Activated CD8-positive, alpha-beta T cell treated with anti-CD3 and anti-CD28 coated beads, Interleukin-2, amount 10 ng/mL, durations not matched to agents 7 days and 5 days (primary cell): ENCODE measurements at regions of chr12 and their contacts with region 1.

Region 1: GRCh38 chr12:67148265-67148664 is 120.9 kb upstream of the CAND1 start:
- DNase-seq: no peak
- ATAC-seq: no peak
- H3K4me3 Mint-ChIP-seq: no peak overlapping the region
- H3K27ac Mint-ChIP-seq: no peak overlapping the region
- H3K4me1 Mint-ChIP-seq: peaks cover 15% of the 10 kb centered on the region
- H3K27me3 Mint-ChIP-seq: peaks cover 2% of the 10 kb centered on the region

Region 2: DNA sequence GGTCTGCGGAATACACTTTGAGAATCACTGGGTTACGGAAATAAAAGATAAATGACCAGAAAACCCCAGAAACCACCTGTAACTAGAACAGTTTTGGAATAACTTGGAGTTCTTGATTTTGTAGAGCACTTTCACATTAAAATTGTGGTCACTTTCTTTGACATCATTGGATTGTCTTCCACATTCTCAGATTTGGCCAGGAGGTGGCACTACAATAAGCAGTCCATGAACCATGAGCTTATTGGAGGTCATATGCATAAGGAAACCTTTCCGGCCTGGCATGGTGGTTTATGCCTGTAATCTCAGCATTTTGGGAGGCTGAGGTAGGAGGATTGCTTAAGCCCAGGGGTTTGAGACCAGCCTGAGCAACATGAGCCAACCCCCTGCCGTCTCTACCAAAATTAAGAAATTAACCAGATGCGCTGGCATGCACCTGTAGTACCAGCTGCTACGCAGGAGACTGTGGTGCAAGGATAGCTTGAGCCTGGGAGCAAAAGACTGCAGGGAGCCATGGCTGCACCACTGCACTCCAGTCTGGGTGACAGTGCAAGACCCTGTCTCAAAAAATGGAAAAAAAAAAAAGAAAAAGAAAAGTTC is 13.2 kb after region 1 on chr12:
- CTCF ChIA-PET with region 1: interaction called, 16 read pairs
- POLR2A ChIA-PET with region 1: no interaction called
- DNase-seq: peak; percentile 59
- ATAC-seq: no peak
- H3K4me3 Mint-ChIP-seq: no peak overlapping the region
- H3K27ac Mint-ChIP-seq: no peak overlapping the region
- H3K4me1 Mint-ChIP-seq: no peaks in the 10 kb centered on the region
- H3K27me3 Mint-ChIP-seq: peaks cover 9% of the 10 kb centered on the region

Region 3: DNA sequence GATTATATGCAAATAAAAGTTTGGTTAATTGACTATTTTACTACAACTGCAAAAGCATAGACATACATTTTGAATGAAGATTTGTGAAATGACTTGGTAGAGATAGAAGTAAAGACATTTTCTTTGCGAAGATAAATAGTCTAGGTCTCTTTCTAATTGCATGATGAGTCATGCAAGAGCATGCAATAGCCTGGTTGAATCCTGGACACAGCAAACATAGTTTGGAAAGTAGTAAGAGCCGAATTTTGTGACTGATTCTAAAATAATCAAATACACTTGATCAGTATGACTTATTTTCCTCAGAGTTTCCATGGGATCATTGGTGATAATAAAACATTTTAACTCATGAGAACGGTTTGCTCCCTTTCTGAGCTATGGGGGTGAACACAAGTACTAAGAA is 93.2 kb after region 1 on chr12:
- CTCF ChIA-PET with region 1: no interaction called
- POLR2A ChIA-PET with region 1: no interaction called
- DNase-seq: no peak
- ATAC-seq: no peak
- H3K4me3 Mint-ChIP-seq: no peak overlapping the region
- H3K27ac Mint-ChIP-seq: no peak overlapping the region
- H3K4me1 Mint-ChIP-seq: no peaks in the 10 kb centered on the region
- H3K27me3 Mint-ChIP-seq: peaks cover 3% of the 10 kb centered on the region